Calu3 (cell line): ENCODE measurements at regions of chr16 and their contacts with region 1.

Region 1: GRCh38 chr16:25707982-25708583 is 16.3 kb downstream of the HS3ST4 start:
- DNase-seq: peak; percentile 36
- H3K4me3 Mint-ChIP-seq: no peak overlapping the region
- H3K27ac Mint-ChIP-seq: no peak overlapping the region
- H3K4me1 Mint-ChIP-seq: no peaks in the 10 kb centered on the region
- H3K27me3 Mint-ChIP-seq: no peaks in the 10 kb centered on the region
- CTCF ChIP-seq: no peak

Region 2: GRCh38 chr16:25235991-25236390 is 472.1 kb before region 1 on chr16:
- CTCF ChIA-PET with region 1: no interaction called
- intact Hi-C with region 1: loop called (anchors 5 kb)
- DNase-seq: no peak
- H3K4me3 Mint-ChIP-seq: no peak overlapping the region
- H3K27ac Mint-ChIP-seq: no peak overlapping the region
- H3K4me1 Mint-ChIP-seq: no peaks in the 10 kb centered on the region
- H3K27me3 Mint-ChIP-seq: peaks cover 7% of the 10 kb centered on the region
- CTCF ChIP-seq: no peak

Region 3: DNA sequence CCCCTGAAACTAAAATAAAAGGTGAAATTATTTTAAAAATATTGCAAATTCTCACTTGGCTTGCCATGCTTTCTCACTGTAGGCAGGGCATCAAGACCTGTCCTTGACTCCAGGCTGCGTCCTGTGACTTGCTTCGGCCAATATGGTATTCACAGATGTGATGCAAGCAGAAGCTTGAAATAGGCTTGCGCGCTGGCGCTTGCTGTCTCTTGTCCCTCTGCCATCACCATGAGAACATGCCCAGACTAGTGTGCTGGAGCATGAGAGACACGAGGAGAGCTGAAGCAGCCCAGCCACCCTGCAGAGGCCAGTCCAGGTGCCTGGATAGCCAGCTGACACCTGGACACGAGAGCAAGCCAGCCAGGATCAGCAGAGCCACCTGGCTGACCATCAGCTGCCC is 428.6 kb before region 1 on chr16:
- CTCF ChIA-PET with region 1: interaction called, 4 read pairs
- intact Hi-C with region 1: loop called (anchors 1 kb)
- DNase-seq: no peak
- H3K4me3 Mint-ChIP-seq: no peak overlapping the region
- H3K27ac Mint-ChIP-seq: no peak overlapping the region
- H3K4me1 Mint-ChIP-seq: no peaks in the 10 kb centered on the region
- H3K27me3 Mint-ChIP-seq: no peaks in the 10 kb centered on the region
- CTCF ChIP-seq: no peak

Region 4: GRCh38 chr16:26149364-26150190 is 441.5 kb after region 1 on chr16:
- CTCF ChIA-PET with region 1: no interaction called
- intact Hi-C with region 1: no loop called
- DNase-seq: no peak
- H3K4me3 Mint-ChIP-seq: no peak overlapping the region
- H3K27ac Mint-ChIP-seq: no peak overlapping the region
- H3K4me1 Mint-ChIP-seq: no peaks in the 10 kb centered on the region
- H3K27me3 Mint-ChIP-seq: no peaks in the 10 kb centered on the region
- CTCF ChIP-seq: no peak